IMR-90 (cell line): ENCODE measurements at regions of chr9 and their contacts with region 1.

Region 1: DNA sequence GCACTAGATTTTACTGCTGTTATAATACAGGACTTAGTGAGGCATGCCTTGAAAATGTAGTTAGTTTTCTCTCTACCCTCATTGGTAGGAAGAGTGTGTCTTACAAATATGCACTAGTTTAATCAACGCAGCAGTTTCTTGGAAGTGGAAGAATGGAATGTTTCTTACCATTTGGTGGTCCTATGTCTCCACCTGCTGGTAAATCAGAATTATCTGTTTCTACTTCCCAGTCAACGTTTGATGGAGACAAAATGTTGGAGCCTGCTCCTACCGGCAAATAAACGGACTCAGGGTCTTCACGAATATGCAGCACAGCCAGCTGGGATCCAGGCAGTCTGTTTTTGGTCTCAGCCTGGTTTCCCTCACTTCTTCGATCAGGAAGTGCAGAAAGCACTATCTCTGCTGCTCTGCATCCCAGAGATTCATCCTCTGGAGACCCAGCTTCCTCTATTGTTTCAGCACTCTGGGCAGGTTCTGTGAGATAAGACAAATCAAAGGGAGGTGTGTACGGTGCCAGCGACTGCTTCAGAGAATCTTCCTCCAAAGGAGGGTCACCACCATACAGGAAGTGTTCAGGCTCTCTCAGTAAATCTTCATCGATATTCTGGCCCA is 59.5 kb upstream of the PCA3 start:
- DNase-seq: peak; percentile 93
- ATAC-seq: peak; percentile 82
- H3K4me3 ChIP-seq: no peak overlapping the region
- H3K27ac ChIP-seq: no peak overlapping the region
- H3K4me1 ChIP-seq: no peaks in the 10 kb centered on the region
- H3K27me3 ChIP-seq: peaks cover 31% of the 10 kb centered on the region
- CTCF ChIP-seq: peak; percentile 88
- POLR2A ChIP-seq: no peak
- RAD21 ChIP-seq: peak; percentile 95

Region 2: DNA sequence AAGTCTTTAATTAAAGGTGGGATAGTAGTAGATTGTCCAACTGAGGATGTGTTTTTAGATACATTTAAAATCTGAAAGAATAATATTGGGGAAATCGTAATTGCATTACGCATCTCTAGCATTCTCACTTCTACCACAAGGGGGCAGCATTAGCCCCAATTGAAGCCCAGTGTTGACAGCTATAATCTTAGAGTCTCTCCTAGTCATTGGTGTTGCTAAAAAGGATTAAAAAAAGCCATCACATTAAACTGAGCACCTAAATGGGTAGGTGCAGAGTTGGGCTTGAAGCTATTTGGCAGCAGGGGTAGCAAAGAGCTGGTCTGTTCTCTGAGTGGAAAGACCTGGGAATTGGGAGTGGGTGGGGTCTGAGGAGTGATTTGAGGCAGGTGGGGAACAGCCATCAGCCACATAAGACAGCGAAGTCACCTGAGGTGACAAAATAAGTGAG is 1439.2 kb before region 1 on chr9:
- CTCF ChIA-PET with region 1: no interaction called
- POLR2A ChIA-PET with region 1: no interaction called
- dilution Hi-C with region 1: no loop called
- in situ Hi-C with region 1: no loop called
- intact Hi-C with region 1: loop called (anchors 5 kb)
- DNase-seq: peak; percentile 42
- ATAC-seq: peak; percentile 86
- H3K4me3 ChIP-seq: no peak overlapping the region
- H3K27ac ChIP-seq: no peak overlapping the region
- H3K4me1 ChIP-seq: no peaks in the 10 kb centered on the region
- H3K27me3 ChIP-seq: no peaks in the 10 kb centered on the region
- CTCF ChIP-seq: peak; percentile 83
- POLR2A ChIP-seq: no peak
- RAD21 ChIP-seq: peak; percentile 70

Region 3: GRCh38 chr9:76393963-76394679 is 310.6 kb before region 1 on chr9 and contains the start of gene RFK:
- CTCF ChIA-PET with region 1: no interaction called
- POLR2A ChIA-PET with region 1: no interaction called
- dilution Hi-C with region 1: no loop called
- in situ Hi-C with region 1: no loop called
- intact Hi-C with region 1: loop called (anchors 2 kb)
- DNase-seq: peak; percentile 93
- ATAC-seq: peak; percentile 96
- H3K4me3 ChIP-seq: peak within 1 kb of the TSS; percentile 86
- H3K27ac ChIP-seq: peak within 1 kb of the TSS; percentile 92
- H3K4me1 ChIP-seq: peaks cover 2% of the 10 kb centered on the region
- H3K27me3 ChIP-seq: no peaks in the 10 kb centered on the region
- CTCF ChIP-seq: peak; percentile 54
- POLR2A ChIP-seq: peak; percentile 76
- RAD21 ChIP-seq: peak; percentile 53
- total RNA-seq, gene RFK: 13.8 and 29.2 TPM in 2 replicates

Region 4: GRCh38 chr9:76445976-76446375 is 258.7 kb before region 1 on chr9:
- CTCF ChIA-PET with region 1: interaction called, 7 read pairs
- POLR2A ChIA-PET with region 1: no interaction called
- dilution Hi-C with region 1: no loop called
- in situ Hi-C with region 1: loop called (anchors 5 kb)
- intact Hi-C with region 1: loop called (anchors 1 kb)
- DNase-seq: no peak
- ATAC-seq: no peak
- H3K4me3 ChIP-seq: no peak overlapping the region
- H3K27ac ChIP-seq: no peak overlapping the region
- H3K4me1 ChIP-seq: peaks cover 5% of the 10 kb centered on the region
- H3K27me3 ChIP-seq: no peaks in the 10 kb centered on the region
- CTCF ChIP-seq: no peak
- POLR2A ChIP-seq: no peak
- RAD21 ChIP-seq: no peak

Region 5: GRCh38 chr9:76643399-76644117 is 61.1 kb before region 1 on chr9:
- CTCF ChIA-PET with region 1: no interaction called
- POLR2A ChIA-PET with region 1: no interaction called
- dilution Hi-C with region 1: no loop called
- in situ Hi-C with region 1: no loop called
- intact Hi-C with region 1: no loop called
- DNase-seq: no peak
- ATAC-seq: no peak
- H3K4me3 ChIP-seq: no peak overlapping the region
- H3K27ac ChIP-seq: no peak overlapping the region
- H3K4me1 ChIP-seq: no peaks in the 10 kb centered on the region
- H3K27me3 ChIP-seq: no peaks in the 10 kb centered on the region
- CTCF ChIP-seq: no peak
- POLR2A ChIP-seq: no peak
- RAD21 ChIP-seq: no peak

Region 6: GRCh38 chr9:76667521-76667957 is 37.2 kb before region 1 on chr9:
- CTCF ChIA-PET with region 1: no interaction called
- POLR2A ChIA-PET with region 1: no interaction called
- dilution Hi-C with region 1: no loop called
- in situ Hi-C with region 1: no loop called
- intact Hi-C with region 1: loop called (anchors 2 kb)
- DNase-seq: peak; percentile 25
- ATAC-seq: peak; percentile 59
- H3K4me3 ChIP-seq: no peak overlapping the region
- H3K27ac ChIP-seq: no peak overlapping the region
- H3K4me1 ChIP-seq: no peaks in the 10 kb centered on the region
- H3K27me3 ChIP-seq: peaks cover 4% of the 10 kb centered on the region; the same call in 1 of the 2 replicates
- CTCF ChIP-seq: no peak
- POLR2A ChIP-seq: no peak
- RAD21 ChIP-seq: no peak